Activated T-helper 1 cell treated with anti-CD3 and anti-CD28 coated beads, Interleukin-12 subunit alpha, Interleukin-12 subunit beta, Interleukin-2, Interleukin-4 antibody, amounts not matched to agents 30 ng/mL and 10 ng/mL and 1 ng/mL, durations not matched to agents 14 hours and 24 hours and 36 hours (primary cell): ENCODE measurements at regions of chr6 and their contacts with region 1.

Region 1: DNA sequence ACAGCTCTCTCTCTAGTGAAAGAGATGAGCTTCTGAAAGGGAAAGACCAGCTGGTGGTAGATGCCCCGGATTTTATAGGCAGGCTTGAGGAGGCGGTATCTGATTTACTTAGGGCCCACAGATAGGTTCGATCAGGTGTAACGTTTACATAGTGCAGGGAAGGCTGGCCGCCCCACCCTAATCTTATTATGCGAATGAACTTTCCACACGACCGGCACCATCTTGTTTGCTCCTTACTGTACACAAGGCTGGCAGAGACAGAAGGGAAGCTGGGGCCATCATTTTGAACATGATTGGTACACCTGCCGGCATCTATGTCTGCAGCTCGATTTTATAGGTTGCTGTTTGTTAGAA is 212.0 kb upstream of the JARID2 start:
- DNase-seq: no peak
- H3K4me3 Mint-ChIP-seq: no peak overlapping the region
- H3K27ac Mint-ChIP-seq: no peak overlapping the region
- H3K4me1 Mint-ChIP-seq: peaks cover 33% of the 10 kb centered on the region
- H3K27me3 Mint-ChIP-seq: no peaks in the 10 kb centered on the region

Region 2: GRCh38 chr6:15017803-15018202 is 16.0 kb before region 1 on chr6:
- intact Hi-C with region 1: loop called (anchors 1 kb)
- DNase-seq: no peak
- H3K4me3 Mint-ChIP-seq: peak overlapping the region; percentile 31
- H3K27ac Mint-ChIP-seq: peak overlapping the region; percentile 61
- H3K4me1 Mint-ChIP-seq: peaks cover 42% of the 10 kb centered on the region
- H3K27me3 Mint-ChIP-seq: peaks cover 3% of the 10 kb centered on the region